ENCODE measurements at regions of chr10 and their contacts with region 1.

Region 1: GRCh38 chr10:73886085-73886529 is 11.8 kb upstream of the CAMK2G start:
- DNase-seq: peak in 1 of 2 experiments; percentile 81
- H3K4me3 ChIP-seq: no peak overlapping the region
- H3K27ac ChIP-seq: no peak overlapping the region
- H3K4me1 ChIP-seq: peaks cover 1 to 9% (median 5%) of the 10 kb centered on the region in 4 experiments; a peak in 5 of 7 replicates
- H3K27me3 ChIP-seq: no peaks in the 10 kb centered on the region
- CTCF ChIP-seq: peak; percentile 85 to 96 (median 95)
- EP300 ChIP-seq: no peak
- POLR2A ChIP-seq: no peak
- RAD21 ChIP-seq: peak; percentile 97 to 99

Region 2: GRCh38 chr10:73717556-73717955 is 168.6 kb before region 1 on chr10:
- CTCF ChIA-PET with region 1: no interaction called
- POLR2A ChIA-PET with region 1: no interaction called
- DNase-seq: no peak
- H3K4me3 ChIP-seq: no peak overlapping the region
- H3K27ac ChIP-seq: no peak overlapping the region
- H3K4me1 ChIP-seq: no peaks in the 10 kb centered on the region
- H3K27me3 ChIP-seq: no peaks in the 10 kb centered on the region
- CTCF ChIP-seq: no peak
- EP300 ChIP-seq: no peak
- POLR2A ChIP-seq: no peak
- RAD21 ChIP-seq: no peak

Region 3: DNA sequence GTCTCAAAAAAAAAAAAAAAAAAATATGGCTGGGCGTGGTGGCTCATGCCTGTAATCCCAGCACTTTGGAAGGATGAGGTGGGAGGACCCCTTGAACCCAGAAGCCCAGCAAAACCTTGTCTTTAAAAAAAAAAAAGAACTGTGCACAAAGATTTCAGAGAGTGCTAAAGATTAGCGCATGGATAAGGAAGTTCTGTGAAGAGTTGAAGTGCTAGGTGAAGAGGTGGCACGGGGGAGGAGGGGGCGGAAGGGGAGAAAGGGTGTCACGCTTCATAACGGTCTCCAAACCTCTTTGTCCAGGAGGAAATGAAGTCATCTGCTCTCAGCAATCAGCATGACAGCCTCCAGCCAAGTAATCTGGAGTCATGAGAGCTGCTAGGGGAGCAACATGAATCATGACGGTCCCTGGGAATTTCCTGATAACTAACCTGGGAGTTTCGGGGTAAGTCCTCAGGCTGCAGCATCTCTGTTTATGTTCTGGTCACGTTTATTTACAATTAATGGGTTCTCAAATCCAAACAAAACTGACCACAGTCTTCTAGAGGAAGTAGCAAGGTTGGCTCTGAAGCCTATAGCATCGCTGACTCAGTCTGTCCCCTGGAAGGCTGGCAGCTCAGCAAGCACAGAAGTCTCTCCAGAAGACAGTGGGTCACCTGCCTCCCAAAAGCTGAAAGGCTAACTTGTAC is 22.9 kb after region 1 on chr10:
- CTCF ChIA-PET with region 1: interaction called, 103 read pairs
- POLR2A ChIA-PET with region 1: interaction called, 7 read pairs
- DNase-seq: no peak
- H3K4me3 ChIP-seq: no peak overlapping the region
- H3K27ac ChIP-seq: no peak overlapping the region
- H3K4me1 ChIP-seq: peaks cover 15 to 30% (median 24%) of the 10 kb centered on the region in 4 experiments
- H3K27me3 ChIP-seq: peaks cover 3 to 19% (median 12%) of the 10 kb centered on the region in 4 experiments; a peak in 6 of 7 replicates
- CTCF ChIP-seq: no peak
- EP300 ChIP-seq: no peak
- POLR2A ChIP-seq: no peak
- RAD21 ChIP-seq: no peak

Region 4: DNA sequence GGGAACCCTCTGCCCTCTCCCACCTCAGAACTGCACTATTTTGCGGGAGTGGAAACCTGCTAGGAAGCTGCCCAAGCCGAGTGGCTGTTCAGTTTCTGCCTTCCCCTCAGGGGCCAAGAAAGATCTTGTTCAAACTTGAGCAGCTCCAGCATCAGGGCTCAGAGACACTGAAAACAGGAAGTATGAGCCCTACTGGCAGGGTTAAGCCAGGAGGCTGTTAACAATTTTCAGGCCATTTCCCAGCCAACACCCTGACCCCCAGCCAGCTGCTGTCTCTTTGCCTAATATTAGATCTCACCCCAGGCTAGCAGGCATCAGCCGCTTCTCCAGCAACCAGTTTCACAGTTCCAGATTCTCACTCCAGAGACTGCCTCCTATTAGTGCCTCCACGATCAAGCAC is 34.0 kb after region 1 on chr10:
- CTCF ChIA-PET with region 1: interaction called, 32 read pairs
- POLR2A ChIA-PET with region 1: interaction called, 3 read pairs
- DNase-seq: no peak
- H3K4me3 ChIP-seq: no peak overlapping the region
- H3K27ac ChIP-seq: peak overlapping the region; percentile 34; the same call in 1 of the 2 replicates
- H3K4me1 ChIP-seq: peaks cover 3 to 10% (median 4%) of the 10 kb centered on the region in 4 experiments
- H3K27me3 ChIP-seq: no peaks in the 10 kb centered on the region
- CTCF ChIP-seq: no peak
- EP300 ChIP-seq: no peak
- POLR2A ChIP-seq: no peak
- RAD21 ChIP-seq: no peak

Region 5: DNA sequence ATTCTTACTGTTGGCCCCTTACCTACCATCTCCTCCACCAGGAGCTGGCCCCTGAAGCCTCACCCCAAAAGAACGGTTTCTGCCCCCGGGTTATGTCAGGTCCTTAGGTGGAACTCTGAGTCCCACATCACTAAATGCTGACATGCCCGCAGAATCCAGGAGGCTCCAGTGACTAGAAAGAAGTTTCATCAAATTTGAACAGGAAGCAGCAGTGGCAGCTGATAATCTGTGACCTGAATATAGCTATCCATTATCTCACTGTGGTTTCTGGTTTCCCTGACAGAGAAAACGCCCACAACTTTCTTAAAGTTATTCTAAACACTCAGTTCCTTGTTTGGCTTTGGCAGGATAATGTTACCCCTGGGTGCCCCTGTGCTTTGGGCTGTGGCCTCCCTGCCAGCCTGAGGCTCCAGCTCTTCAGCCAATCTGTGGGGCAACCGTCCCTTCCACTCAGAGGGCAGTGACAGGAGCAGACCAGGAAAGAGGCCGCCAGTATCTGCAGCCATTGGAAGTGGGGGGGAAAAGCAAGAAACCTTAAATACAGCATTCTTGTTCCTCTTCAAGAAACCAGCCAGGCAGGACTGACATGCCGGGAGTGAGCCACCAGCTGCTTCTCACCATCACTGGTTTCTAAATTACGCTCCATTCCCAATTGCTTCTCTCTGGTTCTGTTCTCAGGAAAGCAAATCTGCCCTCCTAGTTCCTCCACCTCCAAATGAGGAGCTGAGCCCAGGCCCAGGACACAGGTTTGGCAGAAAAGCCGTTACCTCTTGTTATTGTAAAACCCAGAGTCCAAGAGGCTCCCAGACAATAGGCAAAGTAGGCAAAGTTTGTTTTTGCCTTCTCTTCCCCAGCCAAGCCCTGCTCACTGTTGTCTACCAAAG is 70.6 kb after region 1 on chr10:
- CTCF ChIA-PET with region 1: interaction called, 47 read pairs
- POLR2A ChIA-PET with region 1: interaction called, 4 read pairs
- DNase-seq: no peak
- H3K4me3 ChIP-seq: no peak overlapping the region
- H3K27ac ChIP-seq: no peak overlapping the region
- H3K4me1 ChIP-seq: peaks cover 2 to 5% (median 5%) of the 10 kb centered on the region in 4 experiments
- H3K27me3 ChIP-seq: no peaks in the 10 kb centered on the region
- CTCF ChIP-seq: no peak
- EP300 ChIP-seq: no peak
- POLR2A ChIP-seq: no peak
- RAD21 ChIP-seq: no peak

Region 6: GRCh38 chr10:74049955-74050354 is 163.8 kb after region 1 on chr10:
- CTCF ChIA-PET with region 1: interaction called, 10 read pairs
- POLR2A ChIA-PET with region 1: no interaction called
- DNase-seq: no peak
- H3K4me3 ChIP-seq: no peak overlapping the region
- H3K27ac ChIP-seq: no peak overlapping the region
- H3K4me1 ChIP-seq: peaks cover 0 to 6% (median 3%) of the 10 kb centered on the region in 4 experiments; a peak in 3 of 7 replicates
- H3K27me3 ChIP-seq: no peaks in the 10 kb centered on the region
- CTCF ChIP-seq: no peak
- EP300 ChIP-seq: no peak
- POLR2A ChIP-seq: no peak
- RAD21 ChIP-seq: no peak

Region 7: DNA sequence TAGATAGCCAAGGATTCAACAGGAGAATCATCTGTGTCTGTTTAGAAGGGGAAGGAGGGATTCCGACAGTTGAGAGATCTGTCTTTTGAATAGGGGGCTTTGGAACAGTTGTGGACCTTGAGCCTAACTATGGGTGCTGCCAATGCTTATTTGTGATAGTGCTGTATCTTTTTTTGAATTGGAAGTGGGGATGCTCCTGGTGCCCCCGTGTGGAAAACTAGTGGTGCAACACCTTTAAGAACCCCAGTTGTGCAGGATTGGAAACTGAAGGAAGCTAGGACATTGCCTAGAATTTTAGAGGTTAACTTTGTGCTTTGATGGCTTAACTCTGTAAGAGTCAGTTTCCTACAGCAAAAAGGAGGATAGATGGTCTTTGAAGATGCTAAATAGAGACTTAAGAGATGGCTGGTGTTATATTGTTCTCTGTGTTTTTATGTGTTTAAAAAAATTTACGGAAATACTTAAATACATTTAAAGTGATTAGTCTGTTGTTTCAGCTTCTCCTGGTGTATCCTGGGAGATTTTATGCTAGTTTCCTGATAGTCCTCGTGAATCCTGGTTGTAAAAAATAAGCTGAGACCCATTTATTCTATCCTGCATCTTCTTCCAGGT is 195.2 kb after region 1 on chr10:
- CTCF ChIA-PET with region 1: interaction called, 20 read pairs
- POLR2A ChIA-PET with region 1: interaction called, 5 read pairs
- DNase-seq: no peak
- H3K4me3 ChIP-seq: no peak overlapping the region
- H3K27ac ChIP-seq: no peak overlapping the region
- H3K4me1 ChIP-seq: peaks cover 0 to 15% (median 2%) of the 10 kb centered on the region in 4 experiments; a peak in 3 of 7 replicates
- H3K27me3 ChIP-seq: no peaks in the 10 kb centered on the region
- CTCF ChIP-seq: peak; percentile 32 to 78 (median 77)
- EP300 ChIP-seq: no peak
- POLR2A ChIP-seq: no peak
- RAD21 ChIP-seq: peak; percentile 60 to 77